ENCODE measurements at regions of chr19 and their contacts with region 1.

Region 1: GRCh38 chr19:40662921-40663694 is 27.3 kb downstream of the NUMBL start:
- DNase-seq: peak; percentile 91 to 95 (median 93)
- ATAC-seq: peak; percentile 79 to 90 (median 85)
- H3K4me3 ChIP-seq: peak overlapping the region; percentile 28 to 76 (median 64)
- H3K27ac ChIP-seq: peak overlapping the region; percentile 2 to 95 (median 88)
- H3K4me1 ChIP-seq: peaks cover 0 to 20% (median 10%) of the 10 kb centered on the region in 12 donors
- H3K27me3 ChIP-seq: no peaks in the 10 kb centered on the region
- CTCF ChIP-seq: peak in 11 of 12 donors; percentile 96 to 99 (median 99)
- POLR2A ChIP-seq: no peak

Region 2: GRCh38 chr19:40777937-40778705 is 115.0 kb after region 1 on chr19 and contains the start of gene RAB4B:
- intact Hi-C with region 1: loop called in 2 of 10 experiments (anchors 1 kb)
- DNase-seq: peak; percentile 100
- ATAC-seq: peak; percentile 95 to 98 (median 97)
- H3K4me3 ChIP-seq: peak within 1 kb of the TSS; percentile 67 to 94 (median 74)
- H3K27ac ChIP-seq: peak within 1 kb of the TSS; percentile 89 to 100 (median 98)
- H3K4me1 ChIP-seq: peaks cover 0 to 25% (median 13%) of the 10 kb centered on the region in 12 donors
- H3K27me3 ChIP-seq: no peaks in the 10 kb centered on the region
- CTCF ChIP-seq: peak in 2 of 12 donors; percentile 11 to 14
- POLR2A ChIP-seq: peak; percentile 23 to 84
- total RNA-seq, gene RAB4B: 12.3 to 31.3 (median 15.0) TPM

Region 3: DNA sequence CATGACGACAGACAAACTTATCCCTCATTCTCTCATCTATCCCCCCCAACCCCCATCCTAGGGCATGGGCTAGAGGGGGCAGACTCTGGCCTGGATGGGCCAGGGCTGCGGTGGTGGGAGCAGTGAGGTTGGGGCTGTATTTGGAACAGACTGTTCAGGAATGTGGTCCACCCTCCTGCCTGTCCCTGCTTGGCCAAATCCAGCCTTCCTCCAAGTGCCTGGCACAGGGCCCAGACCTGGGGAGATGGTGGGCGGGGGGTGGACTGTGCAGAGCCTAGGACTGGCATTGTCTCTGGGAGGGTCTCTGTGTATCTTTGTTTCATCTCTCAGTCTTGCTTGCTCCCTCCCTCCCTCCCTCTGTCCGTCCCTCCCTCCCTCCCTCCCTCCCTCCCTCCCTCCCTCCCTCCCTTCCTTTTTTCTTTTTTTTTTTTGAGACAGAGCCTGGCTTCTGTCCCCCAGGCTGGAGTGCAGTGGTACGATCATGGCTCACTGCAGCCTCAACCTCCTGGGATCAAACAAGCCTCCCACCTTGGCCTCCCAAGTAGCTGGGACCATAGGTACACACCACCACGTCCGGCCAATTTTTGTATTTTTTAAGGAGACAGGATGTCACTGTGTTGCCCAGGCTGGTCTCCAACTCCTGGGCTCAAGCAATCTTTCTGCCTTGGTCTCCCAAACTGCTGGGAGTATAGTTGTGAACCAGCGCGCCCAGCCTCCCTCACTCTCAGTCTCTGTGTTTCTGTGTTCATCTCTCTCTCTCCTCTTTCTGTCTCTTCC is 150.3 kb after region 1 on chr19:
- intact Hi-C with region 1: loop called in 8 of 10 experiments (anchors 2 to 10 kb)
- DNase-seq: no peak
- ATAC-seq: no peak
- H3K4me3 ChIP-seq: no peak overlapping the region
- H3K27ac ChIP-seq: no peak overlapping the region
- H3K4me1 ChIP-seq: peaks cover 4 to 46% (median 31%) of the 10 kb centered on the region in 12 donors
- H3K27me3 ChIP-seq: no peaks in the 10 kb centered on the region
- CTCF ChIP-seq: no peak
- POLR2A ChIP-seq: no peak

Region 4: DNA sequence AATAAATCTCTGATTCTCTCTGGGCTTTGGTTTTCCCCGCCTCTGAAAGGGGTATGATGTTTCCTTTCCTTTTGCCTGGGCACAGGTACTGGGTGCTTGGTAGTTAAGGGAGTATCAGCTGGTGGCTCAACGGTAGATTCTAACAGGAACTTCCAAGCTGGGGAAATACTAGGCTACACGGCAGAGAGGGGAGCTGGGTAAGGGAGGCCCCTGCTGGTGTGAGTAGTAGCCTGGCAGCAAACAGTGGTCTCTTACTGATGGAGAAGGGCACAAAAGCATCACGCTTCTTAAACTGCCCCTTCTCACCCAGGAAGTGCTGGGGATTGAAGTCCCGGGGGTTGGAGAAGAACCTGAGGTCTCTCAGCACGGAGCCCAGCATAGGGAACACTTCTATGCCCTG is 245.9 kb after region 1 on chr19:
- intact Hi-C with region 1: loop called in 1 of 10 experiments (anchors 5 kb)
- DNase-seq: peak in 1 of 5 donors; percentile 23
- ATAC-seq: no peak
- H3K4me3 ChIP-seq: peak overlapping the region in 3 of 12 donors; percentile 32 to 52 (median 39)
- H3K27ac ChIP-seq: no peak overlapping the region
- H3K4me1 ChIP-seq: peaks cover 0 to 8% (median 0%) of the 10 kb centered on the region in 12 donors
- H3K27me3 ChIP-seq: peaks cover 0 to 28% (median 8%) of the 10 kb centered on the region in 9 donors
- CTCF ChIP-seq: peak in 5 of 12 donors; percentile 34 to 62 (median 48)
- POLR2A ChIP-seq: no peak

Region 5: GRCh38 chr19:41095703-41096102 is 432.6 kb after region 1 on chr19:
- intact Hi-C with region 1: no loop called
- DNase-seq: no peak
- ATAC-seq: no peak
- H3K4me3 ChIP-seq: no peak overlapping the region
- H3K27ac ChIP-seq: no peak overlapping the region
- H3K4me1 ChIP-seq: no peaks in the 10 kb centered on the region
- H3K27me3 ChIP-seq: peaks cover 0 to 23% (median 11%) of the 10 kb centered on the region in 9 donors
- CTCF ChIP-seq: no peak
- POLR2A ChIP-seq: no peak

Region 6: DNA sequence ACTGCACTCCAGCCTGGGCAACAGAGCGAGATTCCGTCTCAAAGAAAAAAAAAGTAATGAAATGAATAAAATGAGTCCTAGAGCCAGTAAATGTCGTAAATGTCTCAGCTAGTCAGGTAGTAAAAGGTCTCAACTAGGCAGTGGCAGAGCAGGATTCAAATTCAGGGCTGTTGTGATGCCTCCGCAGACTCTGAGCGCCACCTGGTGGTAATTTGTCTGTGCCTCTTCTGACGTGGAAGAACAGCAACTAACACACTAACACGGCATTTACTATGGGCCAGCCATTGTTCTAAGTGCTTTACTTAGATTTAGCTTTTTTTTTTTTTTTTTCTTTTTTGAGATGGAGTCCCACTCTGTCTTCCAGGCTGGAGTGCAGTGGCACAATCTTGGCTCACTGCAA is 481.3 kb after region 1 on chr19:
- intact Hi-C with region 1: loop called (anchors 1 to 10 kb)
- DNase-seq: peak; percentile 70 to 84 (median 73)
- ATAC-seq: peak; percentile 47 to 80 (median 73)
- H3K4me3 ChIP-seq: no peak overlapping the region
- H3K27ac ChIP-seq: no peak overlapping the region
- H3K4me1 ChIP-seq: no peaks in the 10 kb centered on the region
- H3K27me3 ChIP-seq: peaks cover 0 to 20% (median 4%) of the 10 kb centered on the region in 9 donors
- CTCF ChIP-seq: peak; percentile 69 to 83 (median 78)
- POLR2A ChIP-seq: no peak

Measured in heart left ventricle (tissue), 16 donors.